GM10248 (cell line): ENCODE measurements at regions of chr3 and their contacts with region 1.

Region 1: DNA sequence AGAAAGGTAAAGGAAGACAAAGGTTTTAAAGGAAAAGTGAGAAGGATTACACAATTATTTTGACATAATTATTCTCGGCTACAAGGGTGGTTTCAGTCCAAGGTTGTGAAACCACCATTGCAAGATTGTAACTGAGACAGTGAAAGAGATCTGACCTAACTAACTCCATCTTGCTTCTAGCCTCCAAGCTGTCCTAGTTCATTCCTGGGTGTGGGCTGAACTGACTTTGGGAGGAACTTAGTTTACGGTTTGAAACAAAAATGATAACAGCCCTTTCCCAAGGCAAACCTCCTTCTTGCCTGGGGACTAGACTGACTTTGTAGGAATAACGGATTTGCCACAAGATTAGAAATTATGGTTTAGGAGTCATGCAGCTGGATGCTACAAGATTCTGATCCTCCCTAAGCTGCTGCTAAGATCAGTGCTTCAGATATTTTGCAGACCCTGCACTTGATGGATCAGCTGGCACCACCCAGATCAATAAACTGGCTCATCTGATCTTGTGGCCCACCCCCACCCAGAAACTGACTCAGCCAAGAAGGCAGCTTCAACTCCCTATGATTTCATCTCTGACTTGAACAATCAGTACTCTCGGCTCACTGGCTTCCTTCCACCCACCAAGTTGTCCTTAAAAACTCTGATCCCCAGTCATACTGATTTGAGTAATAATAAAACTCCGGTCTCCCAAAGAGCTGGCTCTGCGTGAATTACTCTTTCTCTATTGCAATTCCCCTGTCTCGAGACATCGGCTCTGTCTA is 57.7 kb upstream of the AADACL2 start:
- DNase-seq: no peak
- CTCF ChIP-seq: no peak

Region 2: GRCh38 chr3:151589311-151589710 is 86.7 kb before region 1 on chr3:
- CTCF ChIA-PET with region 1: no interaction called
- POLR2A ChIA-PET with region 1: interaction called, 17 read pairs
- DNase-seq: no peak
- CTCF ChIP-seq: no peak